ENCODE measurements at regions of chr20 and their contacts with region 1.

Region 1: GRCh38 chr20:10673988-10674711 is at the start of gene JAG1:
- DNase-seq: peak; percentile 60
- ATAC-seq: peak; percentile 64
- H3K4me3 ChIP-seq: peak within 1 kb of the TSS; percentile 81
- H3K27ac ChIP-seq: peak within 1 kb of the TSS; percentile 66
- H3K4me1 ChIP-seq: peaks cover 27% of the 10 kb centered on the region
- H3K27me3 ChIP-seq: peaks cover 0 to 5% of the 10 kb centered on the region in 2 experiments; a peak in 2 of 4 replicates
- CTCF ChIP-seq: no peak
- EP300 ChIP-seq: no peak
- POLR2A ChIP-seq: peak; percentile 72
- RAD21 ChIP-seq: no peak
- polyA plus RNA-seq, gene JAG1: 0.66 to 1.0 TPM

Region 2: GRCh38 chr20:10558635-10559187 is 115.4 kb before region 1 on chr20:
- CTCF ChIA-PET with region 1: interaction called, 10 read pairs
- POLR2A ChIA-PET with region 1: interaction called, 3 read pairs
- RAD21 ChIA-PET with region 1: interaction called, 21 read pairs
- SMC1A ChIA-PET with region 1: interaction called, 6 read pairs
- in situ Hi-C with region 1: no loop called
- intact Hi-C with region 1: loop called (anchors 2 kb)
- DNase-seq: peak; percentile 84
- ATAC-seq: peak; percentile 98
- H3K4me3 ChIP-seq: no peak overlapping the region
- H3K27ac ChIP-seq: peak overlapping the region; percentile 59
- H3K4me1 ChIP-seq: peaks cover 11% of the 10 kb centered on the region; the same call in 1 of the 2 replicates
- H3K27me3 ChIP-seq: no peaks in the 10 kb centered on the region
- CTCF ChIP-seq: no peak
- EP300 ChIP-seq: peak; percentile 95 to 96; a peak in 3 of 4 replicates
- POLR2A ChIP-seq: no peak
- RAD21 ChIP-seq: no peak

Region 3: GRCh38 chr20:11057624-11058023 is 383.5 kb after region 1 on chr20:
- CTCF ChIA-PET with region 1: no interaction called
- POLR2A ChIA-PET with region 1: no interaction called
- RAD21 ChIA-PET with region 1: no interaction called
- SMC1A ChIA-PET with region 1: no interaction called
- in situ Hi-C with region 1: no loop called
- intact Hi-C with region 1: loop called (anchors 5 kb)
- DNase-seq: no peak
- ATAC-seq: no peak
- H3K4me3 ChIP-seq: no peak overlapping the region
- H3K27ac ChIP-seq: no peak overlapping the region
- H3K4me1 ChIP-seq: no peaks in the 10 kb centered on the region
- H3K27me3 ChIP-seq: no peaks in the 10 kb centered on the region
- CTCF ChIP-seq: no peak
- EP300 ChIP-seq: no peak
- POLR2A ChIP-seq: no peak
- RAD21 ChIP-seq: no peak

Region 4: DNA sequence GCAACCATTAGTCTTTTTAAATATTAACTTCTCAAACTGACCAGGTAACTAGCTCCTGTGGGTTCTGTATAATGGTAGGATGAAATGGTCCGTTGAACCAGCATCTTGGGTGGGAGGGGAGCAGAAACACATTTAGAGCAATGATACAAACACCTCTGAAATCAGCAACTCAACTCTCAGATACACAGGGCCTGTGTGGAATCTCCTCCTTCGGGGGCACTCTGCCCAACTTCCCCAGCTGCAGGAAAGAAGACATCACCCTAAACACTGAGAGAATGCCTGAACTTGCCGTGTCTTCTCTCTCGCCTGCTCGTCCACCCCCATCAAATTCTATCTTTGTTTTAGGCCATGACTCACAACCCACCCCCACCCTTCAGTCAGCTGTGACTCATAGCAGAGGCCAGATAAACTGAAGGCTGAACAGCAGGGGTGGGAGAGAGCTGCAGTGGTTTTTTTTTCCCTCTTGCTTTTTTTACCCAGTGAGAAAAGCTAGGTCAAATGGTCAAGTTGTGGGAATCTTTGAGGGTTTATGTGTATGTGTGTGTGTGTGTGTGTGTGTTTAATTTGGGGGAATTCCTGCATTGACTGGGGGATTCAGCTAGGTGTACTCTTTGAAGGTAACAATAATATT is 593.1 kb after region 1 on chr20:
- CTCF ChIA-PET with region 1: interaction called, 14 read pairs
- POLR2A ChIA-PET with region 1: interaction called, 6 read pairs
- RAD21 ChIA-PET with region 1: interaction called, 30 read pairs
- SMC1A ChIA-PET with region 1: interaction called, 10 read pairs
- in situ Hi-C with region 1: loop called (anchors 5 kb)
- intact Hi-C with region 1: loop called (anchors 2 kb)
- DNase-seq: peak; percentile 79
- ATAC-seq: peak; percentile 93
- H3K4me3 ChIP-seq: no peak overlapping the region
- H3K27ac ChIP-seq: peak overlapping the region; percentile 37; the same call in 1 of the 2 replicates
- H3K4me1 ChIP-seq: peaks cover 15% of the 10 kb centered on the region
- H3K27me3 ChIP-seq: no peaks in the 10 kb centered on the region
- CTCF ChIP-seq: no peak
- EP300 ChIP-seq: peak; percentile 71 to 83
- POLR2A ChIP-seq: no peak
- RAD21 ChIP-seq: peak; percentile 45; the same call in 1 of the 2 replicates

Region 5: DNA sequence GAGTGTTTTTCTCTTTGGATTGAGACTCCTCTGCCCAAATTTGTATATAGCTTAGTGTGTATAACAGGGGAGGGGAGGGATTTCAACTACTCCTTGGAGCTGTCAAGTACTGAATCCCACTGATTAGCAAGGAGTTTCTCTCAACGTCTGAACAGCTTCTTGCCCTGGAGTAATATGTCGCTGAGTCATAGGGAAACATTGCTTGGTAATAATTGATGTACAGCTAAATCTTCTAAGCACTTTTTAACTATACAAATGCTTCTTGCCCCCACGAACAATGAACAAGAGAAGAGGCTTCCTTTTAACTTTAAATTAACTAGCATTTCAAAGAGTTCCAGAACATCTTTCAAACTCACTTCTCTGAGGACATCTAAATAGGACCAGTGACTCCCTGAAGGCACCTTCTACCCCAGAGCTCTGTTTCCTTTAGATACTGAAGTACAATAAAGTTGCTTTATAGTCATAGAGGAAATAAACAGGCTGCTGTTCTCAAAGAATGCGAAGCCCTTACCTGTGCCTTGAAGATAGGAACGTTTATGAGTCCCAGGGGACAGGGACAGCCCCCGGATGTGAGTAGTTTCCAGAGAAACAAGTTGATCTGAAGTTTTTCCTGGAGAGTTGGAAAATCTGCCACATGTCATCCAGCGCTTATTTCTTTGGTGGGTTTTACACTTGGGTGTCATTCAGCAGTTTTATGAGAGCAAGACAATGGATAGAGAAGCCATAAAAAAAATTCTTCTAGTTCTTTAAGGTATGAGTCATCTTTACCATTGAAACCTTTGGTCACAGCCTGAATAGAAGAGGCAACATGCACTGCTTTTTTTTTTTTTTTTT is 781.0 kb after region 1 on chr20:
- CTCF ChIA-PET with region 1: no interaction called
- POLR2A ChIA-PET with region 1: no interaction called
- RAD21 ChIA-PET with region 1: no interaction called
- SMC1A ChIA-PET with region 1: no interaction called
- in situ Hi-C with region 1: no loop called
- intact Hi-C with region 1: loop called (anchors 2 kb)
- DNase-seq: no peak
- ATAC-seq: peak; percentile 66
- H3K4me3 ChIP-seq: no peak overlapping the region
- H3K27ac ChIP-seq: no peak overlapping the region
- H3K4me1 ChIP-seq: no peaks in the 10 kb centered on the region
- H3K27me3 ChIP-seq: no peaks in the 10 kb centered on the region
- CTCF ChIP-seq: no peak
- EP300 ChIP-seq: peak in 1 of 2 experiments; percentile 62; a peak in 1 of 4 replicates
- POLR2A ChIP-seq: no peak
- RAD21 ChIP-seq: no peak

Measured in GM12878 (cell line).